ENCODE measurements at regions of chr2 and their contacts with region 1.

Region 1: GRCh38 chr2:95207111-95207961 is at the start of gene ZNF892:
- DNase-seq: peak; percentile 96
- ATAC-seq: peak; percentile 99
- total RNA-seq, gene ZNF892: 2.5 TPM

Region 2: DNA sequence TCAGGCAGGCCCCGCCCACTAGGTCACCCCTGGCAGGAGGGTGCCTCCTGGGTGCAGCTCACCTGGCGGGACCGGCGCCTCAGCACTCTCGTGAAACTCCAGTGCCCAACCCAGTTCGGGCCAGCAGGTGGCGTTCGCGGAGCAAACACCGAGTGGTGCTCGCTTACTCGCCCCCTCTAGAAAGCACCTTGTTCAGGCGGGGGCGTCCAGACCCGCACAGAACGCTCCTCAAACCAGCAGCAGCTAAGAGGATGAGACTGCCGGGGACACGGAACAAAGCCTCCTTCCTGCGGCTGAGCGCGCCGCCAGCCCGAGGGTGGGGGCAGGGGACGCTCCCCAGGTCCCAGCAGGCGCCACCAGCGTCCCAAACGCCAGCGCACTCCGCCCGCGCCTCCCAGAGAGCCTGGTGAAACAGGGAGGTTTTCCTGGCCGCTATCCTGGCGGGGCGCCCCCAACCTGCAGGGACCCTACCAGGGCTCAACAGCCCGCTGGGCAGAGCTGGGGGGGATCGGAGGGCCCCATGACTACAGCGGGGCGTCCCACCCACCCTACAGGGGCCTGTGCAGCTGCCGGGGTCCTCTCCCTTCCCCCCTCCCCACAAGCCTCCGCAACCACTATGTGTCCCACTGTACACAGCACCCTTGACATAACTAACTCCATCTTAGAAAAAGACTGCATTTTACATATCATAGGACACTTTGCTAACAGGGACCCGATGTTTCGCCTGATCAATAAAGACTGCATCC is 130.4 kb before region 1 on chr2:
- intact Hi-C with region 1: loop called (anchors 5 kb)
- DNase-seq: peak; percentile 78
- ATAC-seq: peak; percentile 75

Measured in Right ventricle myocardium inferior (tissue), 1 donor.